MCF 10A (cell line): ENCODE measurements at regions of chr10 and their contacts with region 1.

Region 1: GRCh38 chr10:77111611-77112550 is 525.7 kb downstream of the KCNMA1 start:
- DNase-seq: peak; percentile 72
- H3K4me3 Mint-ChIP-seq: no peak overlapping the region
- H3K27ac Mint-ChIP-seq: no peak overlapping the region
- H3K4me1 Mint-ChIP-seq: peaks cover 10% of the 10 kb centered on the region
- H3K27me3 Mint-ChIP-seq: no peaks in the 10 kb centered on the region
- CTCF ChIP-seq: peak; percentile 78

Region 2: GRCh38 chr10:76106611-76107010 is 1005.3 kb before region 1 on chr10:
- CTCF ChIA-PET with region 1: no interaction called
- POLR2A ChIA-PET with region 1: no interaction called
- intact Hi-C with region 1: loop called (anchors 5 kb)
- DNase-seq: no peak
- H3K4me3 Mint-ChIP-seq: no peak overlapping the region
- H3K27ac Mint-ChIP-seq: no peak overlapping the region
- H3K4me1 Mint-ChIP-seq: peaks cover 17% of the 10 kb centered on the region
- H3K27me3 Mint-ChIP-seq: no peaks in the 10 kb centered on the region
- CTCF ChIP-seq: no peak

Region 3: GRCh38 chr10:76547352-76547972 is 564.4 kb before region 1 on chr10:
- CTCF ChIA-PET with region 1: no interaction called
- POLR2A ChIA-PET with region 1: no interaction called
- intact Hi-C with region 1: loop called (anchors 5 kb)
- DNase-seq: peak; percentile 84
- H3K4me3 Mint-ChIP-seq: no peak overlapping the region
- H3K27ac Mint-ChIP-seq: no peak overlapping the region
- H3K4me1 Mint-ChIP-seq: no peaks in the 10 kb centered on the region
- H3K27me3 Mint-ChIP-seq: no peaks in the 10 kb centered on the region
- CTCF ChIP-seq: peak; percentile 74

Region 4: GRCh38 chr10:77004917-77005564 is 106.8 kb before region 1 on chr10:
- CTCF ChIA-PET with region 1: interaction called, 32 read pairs
- POLR2A ChIA-PET with region 1: no interaction called
- intact Hi-C with region 1: loop called (anchors 1 kb)
- DNase-seq: peak; percentile 67
- H3K4me3 Mint-ChIP-seq: no peak overlapping the region
- H3K27ac Mint-ChIP-seq: no peak overlapping the region
- H3K4me1 Mint-ChIP-seq: peaks cover 18% of the 10 kb centered on the region
- H3K27me3 Mint-ChIP-seq: no peaks in the 10 kb centered on the region
- CTCF ChIP-seq: peak; percentile 61

Region 5: DNA sequence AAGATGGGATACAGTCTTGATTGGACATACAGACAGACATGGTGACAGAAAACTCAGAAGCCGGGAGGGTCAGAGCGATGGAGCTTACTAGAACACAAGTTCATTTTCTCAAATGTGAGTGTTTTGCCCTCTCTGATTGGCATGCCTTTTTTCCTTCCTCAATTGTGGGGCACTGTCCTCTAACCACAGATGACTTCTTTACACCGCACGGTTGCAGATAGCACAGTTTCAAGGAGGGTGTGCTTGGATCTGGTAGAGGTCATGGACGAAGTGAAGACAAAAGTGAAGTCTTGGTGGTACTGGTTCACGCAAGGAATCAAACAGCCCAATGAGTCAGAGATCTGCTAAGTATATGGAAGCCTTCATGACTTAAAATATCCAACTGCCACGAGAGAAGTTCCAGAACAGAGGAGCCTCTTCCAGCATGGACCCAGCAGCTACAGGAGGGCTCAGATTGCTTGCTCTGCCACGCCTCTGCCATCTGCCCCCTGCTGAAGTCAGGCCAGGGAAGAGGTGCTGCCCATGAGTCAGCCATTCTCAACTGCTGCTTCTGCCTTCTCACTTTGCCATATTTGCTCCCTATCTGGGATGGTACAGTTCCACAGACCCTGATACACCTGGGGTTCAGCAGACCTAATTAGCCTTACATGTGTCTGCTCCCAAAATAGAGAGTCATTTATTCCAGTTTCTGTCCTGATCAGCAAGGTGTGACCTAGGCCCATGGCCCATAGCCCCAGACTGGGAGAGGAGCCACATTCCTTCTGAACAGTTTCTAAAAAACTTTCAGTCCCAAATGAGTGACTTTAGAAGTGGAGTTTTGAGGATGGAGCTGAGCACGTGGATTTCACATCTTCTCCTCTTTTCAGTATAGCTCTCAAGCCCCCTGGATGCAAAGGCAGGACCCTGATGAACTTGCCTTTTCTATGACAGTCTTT is 111.9 kb after region 1 on chr10:
- CTCF ChIA-PET with region 1: no interaction called
- POLR2A ChIA-PET with region 1: no interaction called
- intact Hi-C with region 1: no loop called
- DNase-seq: peak; percentile 19
- H3K4me3 Mint-ChIP-seq: no peak overlapping the region
- H3K27ac Mint-ChIP-seq: no peak overlapping the region
- H3K4me1 Mint-ChIP-seq: no peaks in the 10 kb centered on the region
- H3K27me3 Mint-ChIP-seq: no peaks in the 10 kb centered on the region
- CTCF ChIP-seq: no peak